H1 (cell line): ENCODE measurements at regions of chr19 and their contacts with region 1.

Region 1: DNA sequence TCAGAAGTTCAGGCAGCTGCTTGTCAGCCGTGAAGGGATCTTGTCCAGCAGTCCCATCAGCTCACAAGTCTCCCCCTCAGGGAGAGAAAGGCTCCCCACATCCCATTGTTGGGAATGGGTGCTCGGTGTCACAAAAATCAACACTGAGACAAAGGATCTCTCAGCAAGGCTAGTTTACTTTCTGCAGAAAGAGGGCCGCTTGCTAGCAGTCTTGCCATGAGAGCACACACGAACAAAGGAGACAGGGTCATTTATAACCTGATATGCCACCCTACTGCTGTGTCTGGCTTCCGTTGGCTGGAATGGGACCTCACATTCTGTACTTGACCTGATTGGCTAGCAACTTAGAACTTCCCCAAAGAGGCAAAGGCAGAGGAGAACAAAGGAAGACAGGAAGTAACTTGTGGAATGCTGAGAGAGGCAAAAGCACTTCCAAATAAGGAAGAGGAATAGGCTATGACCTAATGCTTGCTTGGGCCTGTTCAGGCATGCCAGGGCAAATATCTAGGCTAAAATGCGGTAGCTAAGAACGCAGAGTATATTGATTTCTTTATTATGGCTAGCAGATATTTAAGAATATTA is 8.7 kb upstream of the IGFL3 start:
- DNase-seq: peak; percentile 53 to 57
- H3K4me3 ChIP-seq: peak overlapping the region; percentile 0 to 56 (median 34); a peak in 6 of 8 replicates
- H3K27ac ChIP-seq: peak overlapping the region; percentile 98
- H3K4me1 ChIP-seq: peaks cover 5 to 18% (median 8%) of the 10 kb centered on the region in 4 experiments
- H3K27me3 ChIP-seq: no peaks in the 10 kb centered on the region; a peak in 1 of 7 replicates
- CTCF ChIP-seq: no peak
- EP300 ChIP-seq: no peak
- POLR2A ChIP-seq: peak; percentile 96 to 99
- RAD21 ChIP-seq: no peak

Region 2: GRCh38 chr19:46115396-46116106 is 17.6 kb before region 1 on chr19:
- CTCF ChIA-PET with region 1: interaction called, 4 read pairs
- POLR2A ChIA-PET with region 1: interaction called, 18 read pairs
- DNase-seq: no peak
- H3K4me3 ChIP-seq: no peak overlapping the region
- H3K27ac ChIP-seq: no peak overlapping the region
- H3K4me1 ChIP-seq: peaks cover 0 to 3% (median under 1%) of the 10 kb centered on the region in 4 experiments; a peak in 3 of 7 replicates
- H3K27me3 ChIP-seq: no peaks in the 10 kb centered on the region
- CTCF ChIP-seq: no peak
- EP300 ChIP-seq: no peak
- POLR2A ChIP-seq: no peak
- RAD21 ChIP-seq: no peak

Region 3: GRCh38 chr19:46147791-46148288 is 14.6 kb after region 1 on chr19 and contains the start of gene IGFL2:
- CTCF ChIA-PET with region 1: no interaction called
- POLR2A ChIA-PET with region 1: interaction called, 11 read pairs
- DNase-seq: no peak
- H3K4me3 ChIP-seq: no peak within 1 kb of the TSS
- H3K27ac ChIP-seq: no peak within 1 kb of the TSS
- H3K4me1 ChIP-seq: no peaks in the 10 kb centered on the region
- H3K27me3 ChIP-seq: no peaks in the 10 kb centered on the region; a peak in 1 of 7 replicates
- CTCF ChIP-seq: no peak
- EP300 ChIP-seq: no peak
- POLR2A ChIP-seq: no peak
- RAD21 ChIP-seq: no peak
- total RNA-seq, gene IGFL2: not detected in 2 replicates